Cardiac septum (tissue), 1 donor: ENCODE measurements at regions of chrX and their contacts with region 1.

Region 1: DNA sequence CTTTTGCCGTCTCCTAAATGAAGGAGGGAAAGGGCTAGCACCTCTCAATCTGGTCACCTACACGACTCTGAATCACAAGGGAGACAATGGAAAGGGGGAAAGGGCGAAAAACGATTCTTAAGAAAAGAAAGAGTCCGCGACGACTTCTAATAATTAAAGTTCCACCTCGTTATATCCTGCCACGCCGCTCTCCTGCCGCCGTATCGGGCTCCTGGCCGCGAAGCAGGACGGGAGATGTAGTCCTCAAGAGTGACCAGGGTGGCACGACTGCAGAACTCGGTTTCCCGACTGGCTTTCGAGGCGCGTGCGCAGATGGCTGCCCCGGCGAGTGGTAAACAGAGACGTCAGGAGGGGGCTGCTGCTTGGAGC is at the start of gene FOXO4:
- DNase-seq: peak; percentile 95
- total RNA-seq, gene FOXO4: 37.4 TPM

Region 2: DNA sequence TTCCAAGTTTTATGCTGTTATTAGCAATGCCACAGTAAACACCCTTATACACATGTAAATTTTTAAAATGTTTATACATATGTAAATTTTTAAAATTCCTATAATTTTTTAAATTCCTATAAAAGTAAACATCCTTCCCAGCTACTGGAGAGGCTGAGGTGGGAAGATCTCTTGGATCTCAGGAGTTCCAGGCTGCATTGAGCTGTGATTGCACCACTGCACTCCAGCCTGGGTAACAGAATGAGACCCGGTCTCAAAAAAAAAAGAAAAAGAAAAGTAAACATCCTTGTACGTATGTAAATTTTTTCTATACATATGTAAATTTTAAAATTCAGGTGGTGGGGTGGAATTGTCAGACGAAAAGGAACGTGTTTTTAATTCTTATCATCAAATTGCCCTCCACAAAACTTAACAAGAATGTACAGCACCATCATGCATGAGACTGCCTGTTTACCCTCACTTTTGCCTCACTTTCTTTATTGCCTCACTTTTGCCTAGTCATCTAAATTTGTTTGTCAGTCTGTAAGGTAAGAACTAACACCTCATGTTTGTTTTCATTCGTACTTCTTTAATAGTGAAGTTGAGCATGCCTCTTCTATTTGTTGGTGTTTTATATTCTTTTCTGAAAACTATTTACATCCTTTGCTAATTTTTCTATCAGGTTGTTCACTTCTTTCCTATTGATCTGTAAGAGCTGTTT is 172.6 kb before region 1 on chrX:
- intact Hi-C with region 1: no loop called
- DNase-seq: no peak

Region 3: DNA sequence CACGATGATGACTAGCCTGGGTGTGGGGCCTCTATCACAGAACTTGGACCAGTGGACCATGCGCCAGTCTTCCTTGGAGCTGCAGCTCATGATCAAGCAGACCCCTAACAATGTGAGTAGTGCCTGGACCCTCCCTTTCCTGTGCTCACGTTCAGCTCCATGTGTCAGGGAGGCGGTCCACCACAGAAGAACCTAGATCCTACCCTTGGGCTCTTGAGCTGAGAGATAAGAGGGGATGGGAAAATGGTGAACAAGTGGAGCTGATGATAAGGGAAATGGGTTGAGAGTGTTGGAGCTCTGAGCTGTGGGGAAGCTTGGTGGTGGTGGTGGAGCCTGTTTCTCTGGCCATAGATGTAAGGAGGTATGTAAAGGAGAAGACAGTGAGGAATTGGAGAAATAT is 36.0 kb after region 1 on chrX:
- intact Hi-C with region 1: loop called (anchors 5 kb)
- DNase-seq: no peak

Region 4: GRCh38 chrX:71174795-71175194 is 79.3 kb after region 1 on chrX:
- intact Hi-C with region 1: no loop called
- DNase-seq: no peak